Head of caudate nucleus (tissue), 42 donors: ENCODE measurements at regions of chr10 and their contacts with region 1.

Region 1: DNA sequence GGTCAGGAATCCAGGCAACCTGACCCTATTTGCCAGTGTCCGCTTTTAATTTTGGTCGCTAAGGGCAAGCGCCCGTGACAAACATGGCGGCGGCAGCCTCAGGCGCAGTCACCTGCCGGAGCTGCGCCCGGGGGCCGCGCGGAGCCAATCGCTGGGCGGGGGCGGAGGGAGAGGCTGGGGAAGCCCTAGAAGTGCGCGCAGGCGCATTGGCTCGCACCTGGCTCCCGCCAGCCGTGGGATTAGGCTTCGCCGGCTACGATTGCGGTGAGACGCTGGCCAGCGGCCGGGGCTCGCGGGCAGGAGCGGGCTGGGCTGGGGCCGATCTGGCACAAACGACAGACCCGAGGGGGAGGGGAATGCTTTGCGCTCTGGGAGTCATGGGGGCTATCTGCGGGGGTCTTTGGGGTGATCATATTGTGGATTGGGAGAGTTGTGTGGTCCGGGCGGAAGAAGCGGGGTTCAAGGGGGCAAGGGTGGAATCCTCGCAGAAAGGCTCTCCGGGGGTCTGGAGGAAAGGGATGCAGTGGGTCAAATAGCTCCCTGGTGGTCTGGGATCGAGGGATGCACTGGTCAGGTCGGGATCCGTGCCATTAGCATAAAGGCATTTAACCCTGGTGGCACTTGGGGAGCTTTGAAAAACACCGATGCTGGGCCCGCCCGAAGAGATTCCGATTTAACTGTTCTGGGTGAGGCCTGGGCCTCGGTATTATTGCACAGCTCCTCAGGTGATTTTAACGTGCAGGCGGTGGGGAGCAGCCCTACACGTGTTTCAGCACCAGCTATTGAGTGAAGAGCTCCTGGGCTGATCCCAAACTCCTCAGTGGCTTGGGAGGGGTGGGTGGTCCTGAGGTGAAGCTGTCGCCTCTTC is 10.1 kb upstream of the C10orf95 start:
- DNase-seq: peak; percentile 76 to 96 (median 92)

Region 2: DNA sequence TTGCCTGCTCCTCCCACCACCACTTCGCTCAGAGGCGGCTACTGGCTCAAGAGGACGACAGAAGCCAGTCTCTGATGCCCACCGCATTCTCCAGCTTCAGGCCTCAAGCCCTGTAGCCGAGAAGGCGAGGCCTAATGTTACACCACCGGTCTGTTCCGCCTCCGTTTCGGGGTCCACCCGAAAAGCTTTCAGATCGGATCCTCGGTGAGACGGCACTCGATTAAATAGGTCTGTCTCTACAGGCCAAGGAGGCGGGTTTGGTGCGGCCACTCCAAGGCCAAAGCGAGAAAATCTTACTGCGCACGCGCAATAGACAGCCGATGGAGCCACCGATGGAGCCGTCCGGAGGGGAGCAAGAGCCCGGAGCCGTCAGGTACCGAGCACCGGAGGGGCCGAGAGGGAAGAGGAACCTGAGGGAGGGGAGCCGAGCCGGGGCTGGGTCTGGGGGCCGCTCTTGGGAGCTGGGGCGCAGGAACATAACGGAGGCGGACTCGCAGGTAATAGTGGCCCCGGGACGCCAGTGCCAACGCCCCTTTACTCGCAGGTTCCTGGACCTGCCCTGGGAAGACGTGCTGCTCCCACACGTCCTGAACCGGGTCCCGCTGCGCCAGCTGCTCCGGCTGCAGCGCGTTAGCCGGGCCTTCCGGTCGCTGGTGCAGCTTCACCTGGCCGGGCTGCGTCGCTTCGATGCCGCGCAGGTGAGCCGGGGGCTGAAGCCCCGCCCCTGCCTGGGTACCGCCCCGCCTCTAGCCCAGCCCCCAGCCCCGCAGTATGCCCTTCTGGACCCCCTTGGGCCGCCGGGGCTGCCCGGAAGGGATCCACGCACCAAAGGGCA is 40.4 kb before region 1 on chr10 and contains the start of gene FBXL15:
- intact Hi-C with region 1: loop called (anchors 5 kb)
- DNase-seq: peak; percentile 87 to 98 (median 94)